IMR-90 (cell line): ENCODE measurements at regions of chr1 and their contacts with region 1.

Region 1: GRCh38 chr1:203340112-203340804 is 10.7 kb downstream of the FMOD start:
- DNase-seq: peak; percentile 84
- ATAC-seq: peak; percentile 90
- H3K4me3 ChIP-seq: no peak overlapping the region
- H3K27ac ChIP-seq: no peak overlapping the region
- H3K4me1 ChIP-seq: no peaks in the 10 kb centered on the region
- H3K27me3 ChIP-seq: peaks cover 43% of the 10 kb centered on the region
- CTCF ChIP-seq: peak; percentile 96
- POLR2A ChIP-seq: 0 out of 2 replicates have a peak, but pooled peaks have one; percentile 30
- RAD21 ChIP-seq: peak; percentile 95

Region 2: DNA sequence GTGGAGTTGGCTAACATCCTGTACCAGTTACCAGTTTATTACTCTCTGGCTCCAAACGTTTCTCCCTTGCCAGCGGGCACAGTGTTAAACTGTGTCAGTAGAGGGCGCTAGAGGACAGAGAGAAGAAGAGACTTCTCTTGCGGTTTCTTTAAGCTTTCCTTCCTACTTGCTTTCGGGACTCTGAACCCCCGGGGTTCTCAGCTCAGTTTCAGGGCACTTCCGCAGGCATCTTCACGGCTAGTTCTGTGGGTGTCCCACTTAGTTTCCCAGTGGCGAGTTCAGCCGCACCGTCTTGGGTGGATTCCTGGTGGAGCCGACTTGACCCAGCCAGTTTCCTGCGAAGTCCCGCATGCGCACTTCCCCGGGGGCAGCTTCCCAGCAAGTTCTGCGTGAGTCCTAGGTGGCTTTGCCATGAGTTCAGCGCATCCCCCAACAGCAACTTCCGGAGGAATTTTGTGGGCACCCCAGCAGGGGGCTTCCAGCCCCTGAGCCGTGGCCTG is 72.9 kb before region 1 on chr1:
- CTCF ChIA-PET with region 1: interaction called, 13 read pairs
- POLR2A ChIA-PET with region 1: no interaction called
- dilution Hi-C with region 1: no loop called
- in situ Hi-C with region 1: loop called (anchors 5 kb)
- intact Hi-C with region 1: loop called (anchors 1 kb)
- DNase-seq: peak; percentile 78
- ATAC-seq: peak; percentile 85
- H3K4me3 ChIP-seq: peak overlapping the region; percentile 59
- H3K27ac ChIP-seq: peak overlapping the region; percentile 71
- H3K4me1 ChIP-seq: no peaks in the 10 kb centered on the region
- H3K27me3 ChIP-seq: peaks cover 13% of the 10 kb centered on the region
- CTCF ChIP-seq: peak; percentile 88
- POLR2A ChIP-seq: no peak
- RAD21 ChIP-seq: peak; percentile 73

Region 3: GRCh38 chr1:203273206-203273868 is 66.9 kb before region 1 on chr1:
- CTCF ChIA-PET with region 1: interaction called, 5 read pairs
- POLR2A ChIA-PET with region 1: no interaction called
- dilution Hi-C with region 1: no loop called
- in situ Hi-C with region 1: loop called (anchors 5 kb)
- intact Hi-C with region 1: loop called (anchors 1 kb)
- DNase-seq: peak; percentile 82
- ATAC-seq: peak; percentile 75
- H3K4me3 ChIP-seq: no peak overlapping the region
- H3K27ac ChIP-seq: no peak overlapping the region
- H3K4me1 ChIP-seq: peaks cover 10% of the 10 kb centered on the region; the same call in 1 of the 2 replicates
- H3K27me3 ChIP-seq: no peaks in the 10 kb centered on the region; the same call in 1 of the 2 replicates
- CTCF ChIP-seq: peak; percentile 90
- POLR2A ChIP-seq: no peak
- RAD21 ChIP-seq: peak; percentile 94

Region 4: GRCh38 chr1:203440771-203441170 is 100.5 kb after region 1 on chr1:
- CTCF ChIA-PET with region 1: interaction called, 39 read pairs
- POLR2A ChIA-PET with region 1: no interaction called
- dilution Hi-C with region 1: no loop called
- in situ Hi-C with region 1: loop called (anchors 5 kb)
- intact Hi-C with region 1: loop called (anchors 1 kb)
- DNase-seq: peak; percentile 72
- ATAC-seq: peak; percentile 99
- H3K4me3 ChIP-seq: no peak overlapping the region
- H3K27ac ChIP-seq: no peak overlapping the region
- H3K4me1 ChIP-seq: peaks cover 7% of the 10 kb centered on the region; the same call in 1 of the 2 replicates
- H3K27me3 ChIP-seq: peaks cover 24% of the 10 kb centered on the region
- CTCF ChIP-seq: peak; percentile 73
- POLR2A ChIP-seq: no peak
- RAD21 ChIP-seq: peak; percentile 85

Region 5: GRCh38 chr1:203486618-203487370 is 146.5 kb after region 1 on chr1:
- CTCF ChIA-PET with region 1: interaction called, 12 read pairs
- POLR2A ChIA-PET with region 1: no interaction called
- dilution Hi-C with region 1: no loop called
- in situ Hi-C with region 1: loop called (anchors 5 kb)
- intact Hi-C with region 1: loop called (anchors 1 kb)
- DNase-seq: no peak
- ATAC-seq: no peak
- H3K4me3 ChIP-seq: no peak overlapping the region
- H3K27ac ChIP-seq: peak overlapping the region; percentile 72
- H3K4me1 ChIP-seq: peaks cover 3% of the 10 kb centered on the region; the same call in 1 of the 2 replicates
- H3K27me3 ChIP-seq: no peaks in the 10 kb centered on the region
- CTCF ChIP-seq: no peak
- POLR2A ChIP-seq: no peak
- RAD21 ChIP-seq: no peak

Region 6: DNA sequence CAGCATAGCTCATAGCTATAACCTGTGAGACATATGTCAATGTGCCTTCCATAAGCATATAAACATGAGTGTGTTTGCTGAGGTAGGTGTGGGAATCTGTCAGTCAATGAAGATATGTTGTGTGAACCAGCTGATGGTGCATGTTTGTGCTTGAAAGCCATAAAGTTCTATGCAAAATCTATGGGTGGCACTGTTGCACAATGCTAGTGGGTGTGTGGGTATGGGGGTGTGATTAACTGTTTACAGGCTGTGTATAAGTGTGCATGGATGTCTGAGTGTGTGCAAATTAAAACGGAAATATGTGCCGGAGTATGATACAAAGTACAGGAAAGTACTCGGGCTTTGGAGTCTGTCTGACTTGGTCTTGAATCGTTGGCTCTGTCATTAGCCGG is 285.4 kb after region 1 on chr1:
- CTCF ChIA-PET with region 1: no interaction called
- POLR2A ChIA-PET with region 1: no interaction called
- dilution Hi-C with region 1: no loop called
- in situ Hi-C with region 1: no loop called
- intact Hi-C with region 1: loop called (anchors 1 kb)
- DNase-seq: no peak
- ATAC-seq: no peak
- H3K4me3 ChIP-seq: no peak overlapping the region
- H3K27ac ChIP-seq: no peak overlapping the region
- H3K4me1 ChIP-seq: peaks cover 17% of the 10 kb centered on the region
- H3K27me3 ChIP-seq: no peaks in the 10 kb centered on the region
- CTCF ChIP-seq: 0 out of 2 replicates have a peak, but pooled peaks have one; percentile 21
- POLR2A ChIP-seq: no peak
- RAD21 ChIP-seq: peak; percentile 33; the same call in 1 of the 2 replicates

Region 7: DNA sequence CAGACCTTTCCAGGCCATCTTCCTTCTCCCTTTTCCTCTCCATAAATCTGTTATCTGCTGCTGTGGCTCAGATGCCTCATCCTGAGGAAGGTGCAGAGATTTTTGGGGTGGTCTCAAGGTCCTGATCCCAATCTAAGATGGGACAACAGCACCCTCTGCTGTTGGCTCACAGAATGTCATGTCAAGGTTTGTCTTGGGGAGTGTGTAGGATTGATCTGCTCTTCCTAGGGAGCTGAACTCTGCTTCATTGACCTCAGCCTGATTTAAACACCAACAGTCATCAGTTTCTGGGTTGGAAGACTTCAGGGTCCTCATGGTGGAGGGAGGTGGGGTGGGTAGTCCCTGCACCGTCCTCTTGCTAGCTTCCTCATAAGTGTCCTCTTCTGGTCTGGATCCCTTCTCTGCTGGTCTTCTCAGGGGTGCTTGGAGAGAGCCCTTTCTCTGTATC is 361.9 kb after region 1 on chr1:
- CTCF ChIA-PET with region 1: no interaction called
- POLR2A ChIA-PET with region 1: no interaction called
- dilution Hi-C with region 1: no loop called
- in situ Hi-C with region 1: loop called (anchors 10 kb)
- intact Hi-C with region 1: loop called (anchors 2 kb)
- DNase-seq: peak; percentile 56
- ATAC-seq: peak; percentile 71
- H3K4me3 ChIP-seq: no peak overlapping the region
- H3K27ac ChIP-seq: no peak overlapping the region
- H3K4me1 ChIP-seq: no peaks in the 10 kb centered on the region
- H3K27me3 ChIP-seq: no peaks in the 10 kb centered on the region
- CTCF ChIP-seq: peak; percentile 71
- POLR2A ChIP-seq: no peak
- RAD21 ChIP-seq: peak; percentile 89